ENCODE measurements at regions of chr6 and their contacts with region 1.

Region 1: DNA sequence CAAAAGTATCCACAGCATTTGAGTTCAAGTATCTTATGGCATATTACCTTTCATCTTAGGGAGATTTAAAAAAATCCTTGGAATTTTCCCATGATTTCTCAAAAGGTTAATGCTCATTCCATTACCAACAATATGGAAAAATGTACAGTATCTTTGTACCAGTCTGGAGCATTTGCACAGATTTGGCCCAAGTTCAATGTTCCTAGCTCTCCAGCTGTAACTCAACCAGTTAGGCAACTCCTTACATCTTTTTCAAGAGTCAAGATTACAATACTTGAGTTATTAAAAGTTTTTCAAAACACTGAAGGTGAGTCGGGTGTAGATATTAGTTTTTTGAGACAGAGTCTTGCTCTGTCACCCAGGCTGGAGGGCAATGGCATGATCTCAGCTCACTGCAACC is 1.0 kb downstream of the OR2J2 start:
- ATAC-seq: no peak
- H3K4me3 ChIP-seq: no peak overlapping the region
- H3K27ac ChIP-seq: no peak overlapping the region
- H3K4me1 ChIP-seq: no peaks in the 10 kb centered on the region

Region 2: GRCh38 chr6:29589423-29590048 is 417.8 kb after region 1 on chr6:
- in situ Hi-C with region 1: loop called in 1 of 9 experiments (anchors 25 kb)
- ATAC-seq: peak in 4 of 8 experiments; percentile 64 to 69 (median 65)
- H3K4me3 ChIP-seq: no peak overlapping the region
- H3K27ac ChIP-seq: no peak overlapping the region
- H3K4me1 ChIP-seq: no peaks in the 10 kb centered on the region